CD4-positive, alpha-beta T cell (primary cell): ENCODE measurements at regions of chr2 and their contacts with region 1.

Region 1: GRCh38 chr2:196160101-196160500 is 11.3 kb downstream of the STK17B start:
- DNase-seq: peak in 9 of 14 experiments; percentile 21 to 94 (median 58)
- ATAC-seq: peak; percentile 54
- H3K4me3 ChIP-seq: peak overlapping the region; percentile 91
- H3K4me3 Mint-ChIP-seq: peak overlapping the region; percentile 86
- H3K27ac ChIP-seq: peak overlapping the region; percentile 80 to 88
- H3K27ac Mint-ChIP-seq: peak overlapping the region; percentile 85
- H3K4me1 ChIP-seq: peaks cover 32% of the 10 kb centered on the region
- H3K4me1 Mint-ChIP-seq: peaks cover 92% of the 10 kb centered on the region
- H3K27me3 ChIP-seq: no peaks in the 10 kb centered on the region
- H3K27me3 Mint-ChIP-seq: no peaks in the 10 kb centered on the region
- CTCF ChIP-seq: no peak

Region 2: GRCh38 chr2:196137271-196137670 is 22.8 kb before region 1 on chr2:
- CTCF ChIA-PET with region 1: interaction called, 4 read pairs
- POLR2A ChIA-PET with region 1: interaction called, 82 read pairs
- intact Hi-C with region 1: loop called (anchors 2 kb)
- DNase-seq: no peak
- ATAC-seq: no peak
- H3K4me3 ChIP-seq: no peak overlapping the region
- H3K4me3 Mint-ChIP-seq: peak overlapping the region; percentile 1
- H3K27ac ChIP-seq: no peak overlapping the region
- H3K27ac Mint-ChIP-seq: peak overlapping the region; percentile 76
- H3K4me1 ChIP-seq: peaks cover 9% of the 10 kb centered on the region
- H3K4me1 Mint-ChIP-seq: peaks cover 58% of the 10 kb centered on the region
- H3K27me3 ChIP-seq: no peaks in the 10 kb centered on the region
- H3K27me3 Mint-ChIP-seq: no peaks in the 10 kb centered on the region
- CTCF ChIP-seq: no peak

Region 3: GRCh38 chr2:196149948-196150347 is 10.2 kb before region 1 on chr2:
- CTCF ChIA-PET with region 1: interaction called, 4 read pairs
- POLR2A ChIA-PET with region 1: interaction called, 82 read pairs
- intact Hi-C with region 1: loop called in 1 of 2 experiments (anchors 1 kb)
- DNase-seq: peak in 2 of 14 experiments; percentile 58 to 59
- ATAC-seq: peak; percentile 17
- H3K4me3 ChIP-seq: no peak overlapping the region
- H3K4me3 Mint-ChIP-seq: peak overlapping the region; percentile 62
- H3K27ac ChIP-seq: peak overlapping the region; percentile 10 to 53
- H3K27ac Mint-ChIP-seq: peak overlapping the region; percentile 85
- H3K4me1 ChIP-seq: peaks cover 51% of the 10 kb centered on the region
- H3K4me1 Mint-ChIP-seq: peaks cover 96% of the 10 kb centered on the region
- H3K27me3 ChIP-seq: no peaks in the 10 kb centered on the region
- H3K27me3 Mint-ChIP-seq: no peaks in the 10 kb centered on the region
- CTCF ChIP-seq: no peak

Region 4: GRCh38 chr2:196200557-196200956 is 40.5 kb after region 1 on chr2:
- CTCF ChIA-PET with region 1: no interaction called
- POLR2A ChIA-PET with region 1: interaction called, 14 read pairs
- intact Hi-C with region 1: no loop called
- DNase-seq: peak in 5 of 14 experiments; percentile 21 to 76 (median 67)
- ATAC-seq: peak; percentile 80
- H3K4me3 ChIP-seq: peak overlapping the region; percentile 37
- H3K4me3 Mint-ChIP-seq: peak overlapping the region; percentile 74
- H3K27ac ChIP-seq: peak overlapping the region; percentile 19 to 60
- H3K27ac Mint-ChIP-seq: peak overlapping the region; percentile 90
- H3K4me1 ChIP-seq: peaks cover 14% of the 10 kb centered on the region
- H3K4me1 Mint-ChIP-seq: peaks cover 56% of the 10 kb centered on the region
- H3K27me3 ChIP-seq: no peaks in the 10 kb centered on the region
- H3K27me3 Mint-ChIP-seq: no peaks in the 10 kb centered on the region
- CTCF ChIP-seq: no peak

Region 5: DNA sequence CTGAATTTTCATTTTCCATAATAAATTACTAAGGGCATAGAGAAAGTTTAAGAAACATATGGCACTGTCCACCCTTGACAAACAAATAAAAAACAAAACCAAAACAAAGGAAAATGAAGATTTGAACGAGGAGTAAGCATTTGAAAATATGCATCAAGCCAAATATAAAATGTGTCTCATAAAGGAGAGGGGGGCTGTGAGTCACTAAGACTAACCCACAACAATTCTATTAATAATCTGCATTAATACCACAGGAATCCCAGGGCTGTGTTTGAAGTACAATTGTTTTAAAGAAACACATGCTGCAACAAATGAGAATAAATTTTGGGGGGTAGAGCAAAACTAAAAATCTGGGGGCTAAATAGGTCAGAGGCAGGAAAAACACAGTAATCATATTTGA is 65.1 kb after region 1 on chr2:
- CTCF ChIA-PET with region 1: interaction called, 8 read pairs
- POLR2A ChIA-PET with region 1: interaction called, 14 read pairs
- intact Hi-C with region 1: no loop called
- DNase-seq: no peak
- ATAC-seq: no peak
- H3K4me3 ChIP-seq: no peak overlapping the region
- H3K4me3 Mint-ChIP-seq: peak overlapping the region; percentile 7
- H3K27ac ChIP-seq: no peak overlapping the region
- H3K27ac Mint-ChIP-seq: peak overlapping the region; percentile 46
- H3K4me1 ChIP-seq: peaks cover 30% of the 10 kb centered on the region
- H3K4me1 Mint-ChIP-seq: peaks cover 89% of the 10 kb centered on the region
- H3K27me3 ChIP-seq: no peaks in the 10 kb centered on the region
- H3K27me3 Mint-ChIP-seq: no peaks in the 10 kb centered on the region
- CTCF ChIP-seq: no peak

Region 6: GRCh38 chr2:196239622-196240587 is 79.8 kb after region 1 on chr2:
- CTCF ChIA-PET with region 1: interaction called, 11 read pairs
- POLR2A ChIA-PET with region 1: interaction called, 24 read pairs
- intact Hi-C with region 1: no loop called
- DNase-seq: peak; percentile 57 to 95 (median 73)
- ATAC-seq: peak; percentile 80
- H3K4me3 ChIP-seq: peak overlapping the region; percentile 13
- H3K4me3 Mint-ChIP-seq: peak overlapping the region; percentile 83
- H3K27ac ChIP-seq: peak overlapping the region; percentile 54 to 76
- H3K27ac Mint-ChIP-seq: peak overlapping the region; percentile 95
- H3K4me1 ChIP-seq: peaks cover 57% of the 10 kb centered on the region
- H3K4me1 Mint-ChIP-seq: peaks cover 79% of the 10 kb centered on the region
- H3K27me3 ChIP-seq: no peaks in the 10 kb centered on the region
- H3K27me3 Mint-ChIP-seq: no peaks in the 10 kb centered on the region
- CTCF ChIP-seq: no peak

Region 7: GRCh38 chr2:196268538-196269338 is 108.6 kb after region 1 on chr2:
- CTCF ChIA-PET with region 1: interaction called, 3 read pairs
- POLR2A ChIA-PET with region 1: interaction called, 13 read pairs
- intact Hi-C with region 1: loop called in 1 of 2 experiments (anchors 5 kb)
- DNase-seq: peak in 3 of 14 experiments; percentile 44 to 62 (median 50)
- ATAC-seq: peak; percentile 53
- H3K4me3 ChIP-seq: peak overlapping the region; percentile 28
- H3K4me3 Mint-ChIP-seq: peak overlapping the region; percentile 59
- H3K27ac ChIP-seq: peak overlapping the region; percentile 39 to 53
- H3K27ac Mint-ChIP-seq: peak overlapping the region; percentile 83
- H3K4me1 ChIP-seq: peaks cover 17% of the 10 kb centered on the region
- H3K4me1 Mint-ChIP-seq: peaks cover 65% of the 10 kb centered on the region
- H3K27me3 ChIP-seq: no peaks in the 10 kb centered on the region
- H3K27me3 Mint-ChIP-seq: no peaks in the 10 kb centered on the region
- CTCF ChIP-seq: no peak

Region 8: GRCh38 chr2:196314780-196315179 is 154.7 kb after region 1 on chr2:
- CTCF ChIA-PET with region 1: no interaction called
- POLR2A ChIA-PET with region 1: no interaction called
- intact Hi-C with region 1: no loop called
- DNase-seq: no peak
- ATAC-seq: no peak
- H3K4me3 ChIP-seq: no peak overlapping the region
- H3K4me3 Mint-ChIP-seq: no peak overlapping the region
- H3K27ac ChIP-seq: no peak overlapping the region
- H3K27ac Mint-ChIP-seq: no peak overlapping the region
- H3K4me1 ChIP-seq: no peaks in the 10 kb centered on the region
- H3K4me1 Mint-ChIP-seq: no peaks in the 10 kb centered on the region
- H3K27me3 ChIP-seq: no peaks in the 10 kb centered on the region
- H3K27me3 Mint-ChIP-seq: no peaks in the 10 kb centered on the region
- CTCF ChIP-seq: no peak

Region 9: GRCh38 chr2:196515051-196515450 is 354.9 kb after region 1 on chr2:
- CTCF ChIA-PET with region 1: no interaction called
- POLR2A ChIA-PET with region 1: no interaction called
- intact Hi-C with region 1: no loop called
- DNase-seq: no peak
- ATAC-seq: no peak
- H3K4me3 ChIP-seq: no peak overlapping the region
- H3K4me3 Mint-ChIP-seq: no peak overlapping the region
- H3K27ac ChIP-seq: no peak overlapping the region
- H3K27ac Mint-ChIP-seq: no peak overlapping the region
- H3K4me1 ChIP-seq: no peaks in the 10 kb centered on the region
- H3K4me1 Mint-ChIP-seq: no peaks in the 10 kb centered on the region
- H3K27me3 ChIP-seq: peaks cover 0 to 5% of the 10 kb centered on the region in 2 experiments
- H3K27me3 Mint-ChIP-seq: peaks cover 21% of the 10 kb centered on the region
- CTCF ChIP-seq: no peak

Region 10: GRCh38 chr2:196954001-196954400 is 793.9 kb after region 1 on chr2:
- CTCF ChIA-PET with region 1: no interaction called
- POLR2A ChIA-PET with region 1: no interaction called
- intact Hi-C with region 1: no loop called
- DNase-seq: no peak
- ATAC-seq: no peak
- H3K4me3 ChIP-seq: no peak overlapping the region
- H3K4me3 Mint-ChIP-seq: no peak overlapping the region
- H3K27ac ChIP-seq: no peak overlapping the region
- H3K27ac Mint-ChIP-seq: no peak overlapping the region
- H3K4me1 ChIP-seq: no peaks in the 10 kb centered on the region
- H3K4me1 Mint-ChIP-seq: no peaks in the 10 kb centered on the region
- H3K27me3 ChIP-seq: no peaks in the 10 kb centered on the region
- H3K27me3 Mint-ChIP-seq: no peaks in the 10 kb centered on the region
- CTCF ChIP-seq: no peak

Region 11: GRCh38 chr2:197007716-197008628 is 847.9 kb after region 1 on chr2:
- CTCF ChIA-PET with region 1: no interaction called
- POLR2A ChIA-PET with region 1: no interaction called
- intact Hi-C with region 1: no loop called
- DNase-seq: no peak
- ATAC-seq: no peak
- H3K4me3 ChIP-seq: no peak overlapping the region
- H3K4me3 Mint-ChIP-seq: no peak overlapping the region
- H3K27ac ChIP-seq: no peak overlapping the region
- H3K27ac Mint-ChIP-seq: no peak overlapping the region
- H3K4me1 ChIP-seq: peaks cover 2% of the 10 kb centered on the region
- H3K4me1 Mint-ChIP-seq: peaks cover 8% of the 10 kb centered on the region
- H3K27me3 ChIP-seq: no peaks in the 10 kb centered on the region
- H3K27me3 Mint-ChIP-seq: no peaks in the 10 kb centered on the region
- CTCF ChIP-seq: no peak